Naive thymus-derived CD4-positive, alpha-beta T cell (primary cell): ENCODE measurements at regions of chr4 and their contacts with region 1.

Region 1: GRCh38 chr4:40056716-40057585 is at the start of gene N4BP2:
- DNase-seq: peak; percentile 58 to 82 (median 76)
- ATAC-seq: peak; percentile 79
- H3K4me3 ChIP-seq: peak within 1 kb of the TSS; percentile 80
- H3K4me3 Mint-ChIP-seq: peak within 1 kb of the TSS; percentile 91 to 100 (median 97)
- H3K27ac ChIP-seq: peak within 1 kb of the TSS; percentile 91
- H3K27ac Mint-ChIP-seq: peak within 1 kb of the TSS; percentile 94 to 99 (median 98)
- H3K4me1 ChIP-seq: peaks cover 14 to 15% of the 10 kb centered on the region in 2 donors
- H3K4me1 Mint-ChIP-seq: peaks cover 19 to 48% (median 36%) of the 10 kb centered on the region in 7 donors
- H3K27me3 ChIP-seq: no peaks in the 10 kb centered on the region
- H3K27me3 Mint-ChIP-seq: peaks cover 0 to 6% (median 0%) of the 10 kb centered on the region in 5 donors
- total RNA-seq, gene N4BP2: 16.0 to 37.2 (median 22.2) TPM

Region 2: GRCh38 chr4:39044364-39044955 is 1012.5 kb before region 1 on chr4:
- CTCF ChIA-PET with region 1: no interaction called
- POLR2A ChIA-PET with region 1: no interaction called
- intact Hi-C with region 1: loop called (anchors 5 to 10 kb)
- DNase-seq: peak; percentile 82 to 98 (median 89)
- ATAC-seq: peak; percentile 92
- H3K4me3 ChIP-seq: peak overlapping the region; percentile 68
- H3K4me3 Mint-ChIP-seq: peak overlapping the region; percentile 86 to 97 (median 91)
- H3K27ac ChIP-seq: peak overlapping the region; percentile 82
- H3K27ac Mint-ChIP-seq: peak overlapping the region; percentile 66 to 99 (median 93)
- H3K4me1 ChIP-seq: peaks cover 28 to 32% of the 10 kb centered on the region in 2 donors
- H3K4me1 Mint-ChIP-seq: peaks cover 17 to 63% (median 55%) of the 10 kb centered on the region in 7 donors
- H3K27me3 ChIP-seq: no peaks in the 10 kb centered on the region
- H3K27me3 Mint-ChIP-seq: no peaks in the 10 kb centered on the region

Region 3: GRCh38 chr4:39469429-39470077 is 587.4 kb before region 1 on chr4:
- CTCF ChIA-PET with region 1: no interaction called
- POLR2A ChIA-PET with region 1: no interaction called
- intact Hi-C with region 1: loop called in 1 of 2 experiments (anchors 2 kb)
- DNase-seq: peak in 7 of 9 donors; percentile 36 to 60 (median 47)
- ATAC-seq: peak; percentile 98
- H3K4me3 ChIP-seq: no peak overlapping the region
- H3K4me3 Mint-ChIP-seq: no peak overlapping the region
- H3K27ac ChIP-seq: no peak overlapping the region
- H3K27ac Mint-ChIP-seq: peak overlapping the region in 6 of 9 donors; percentile 24 to 62 (median 44)
- H3K4me1 ChIP-seq: no peaks in the 10 kb centered on the region
- H3K4me1 Mint-ChIP-seq: peaks cover 0 to 15% (median 4%) of the 10 kb centered on the region in 7 donors
- H3K27me3 ChIP-seq: no peaks in the 10 kb centered on the region
- H3K27me3 Mint-ChIP-seq: no peaks in the 10 kb centered on the region

Region 4: GRCh38 chr4:40121515-40121914 is 64.6 kb after region 1 on chr4:
- CTCF ChIA-PET with region 1: interaction called, 4 read pairs
- POLR2A ChIA-PET with region 1: interaction called, 3 read pairs
- intact Hi-C with region 1: loop called (anchors 1 to 5 kb)
- DNase-seq: no peak
- ATAC-seq: peak; percentile 69
- H3K4me3 ChIP-seq: no peak overlapping the region
- H3K4me3 Mint-ChIP-seq: no peak overlapping the region
- H3K27ac ChIP-seq: peak overlapping the region; percentile 17
- H3K27ac Mint-ChIP-seq: peak overlapping the region; percentile 12 to 75 (median 67)
- H3K4me1 ChIP-seq: peaks cover 7 to 25% of the 10 kb centered on the region in 2 donors
- H3K4me1 Mint-ChIP-seq: peaks cover 3 to 71% (median 54%) of the 10 kb centered on the region in 7 donors
- H3K27me3 ChIP-seq: no peaks in the 10 kb centered on the region
- H3K27me3 Mint-ChIP-seq: no peaks in the 10 kb centered on the region

Region 5: DNA sequence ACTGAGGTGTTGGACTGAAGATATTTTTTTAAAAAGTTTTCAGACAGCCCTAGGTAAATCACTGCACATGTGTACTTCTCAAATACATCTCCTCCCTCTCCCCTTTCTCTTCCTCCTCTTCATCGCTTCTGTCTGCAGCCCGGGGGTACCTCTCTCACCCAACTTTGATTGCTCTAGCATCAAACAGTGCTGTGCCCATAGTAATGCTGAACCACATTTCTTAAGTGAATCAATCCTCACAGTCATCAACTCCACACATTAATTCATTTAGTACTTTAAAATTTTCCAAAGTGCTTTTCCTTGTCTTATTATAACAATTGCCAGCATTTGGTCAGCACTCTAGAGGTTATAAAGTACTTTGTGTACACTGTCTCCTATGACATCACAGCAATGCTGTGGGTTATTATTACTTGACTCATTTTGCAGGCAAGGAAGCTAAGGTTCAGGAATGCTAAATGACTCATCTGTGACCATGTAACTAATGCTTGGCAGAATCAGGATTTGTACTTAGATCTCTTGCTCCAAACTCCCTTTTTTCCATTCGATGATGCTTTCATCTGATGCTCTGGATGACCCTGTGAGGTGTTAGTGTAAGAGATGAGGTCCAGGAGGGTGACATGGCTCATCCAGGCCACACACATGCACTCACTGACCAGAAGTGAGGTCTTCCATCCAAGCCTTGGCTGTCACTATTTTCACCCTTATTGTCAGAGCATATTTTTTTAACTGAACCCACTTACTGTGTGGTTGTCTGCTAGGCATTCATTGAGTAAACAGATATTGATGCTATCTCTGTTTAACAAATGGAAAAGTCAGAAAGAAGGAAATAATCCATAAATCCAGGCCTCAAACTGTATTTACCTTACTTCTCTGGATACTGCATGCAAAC is 198.7 kb after region 1 on chr4:
- CTCF ChIA-PET with region 1: no interaction called
- POLR2A ChIA-PET with region 1: no interaction called
- intact Hi-C with region 1: loop called in 1 of 2 experiments (anchors 5 kb)
- DNase-seq: no peak
- ATAC-seq: no peak
- H3K4me3 ChIP-seq: no peak overlapping the region
- H3K4me3 Mint-ChIP-seq: peak overlapping the region; percentile 47 to 93 (median 64)
- H3K27ac ChIP-seq: peak overlapping the region; percentile 58
- H3K27ac Mint-ChIP-seq: peak overlapping the region; percentile 79 to 99 (median 92)
- H3K4me1 ChIP-seq: peaks cover 22 to 68% of the 10 kb centered on the region in 2 donors
- H3K4me1 Mint-ChIP-seq: peaks cover 46 to 83% (median 77%) of the 10 kb centered on the region in 7 donors
- H3K27me3 ChIP-seq: no peaks in the 10 kb centered on the region
- H3K27me3 Mint-ChIP-seq: no peaks in the 10 kb centered on the region

Region 6: GRCh38 chr4:40550948-40551462 is 494.1 kb after region 1 on chr4:
- CTCF ChIA-PET with region 1: no interaction called
- POLR2A ChIA-PET with region 1: no interaction called
- intact Hi-C with region 1: loop called (anchors 1 to 2 kb)
- DNase-seq: peak in 8 of 9 donors; percentile 25 to 77 (median 62)
- ATAC-seq: peak; percentile 68
- H3K4me3 ChIP-seq: peak overlapping the region; percentile 47
- H3K4me3 Mint-ChIP-seq: peak overlapping the region; percentile 74 to 95 (median 85)
- H3K27ac ChIP-seq: peak overlapping the region; percentile 61
- H3K27ac Mint-ChIP-seq: peak overlapping the region; percentile 83 to 99 (median 92)
- H3K4me1 ChIP-seq: peaks cover 0 to 11% of the 10 kb centered on the region in 2 donors
- H3K4me1 Mint-ChIP-seq: peaks cover 9 to 44% (median 19%) of the 10 kb centered on the region in 7 donors
- H3K27me3 ChIP-seq: no peaks in the 10 kb centered on the region
- H3K27me3 Mint-ChIP-seq: no peaks in the 10 kb centered on the region